MCF 10A (cell line): ENCODE measurements at regions of chr7 and their contacts with region 1.

Region 1: DNA sequence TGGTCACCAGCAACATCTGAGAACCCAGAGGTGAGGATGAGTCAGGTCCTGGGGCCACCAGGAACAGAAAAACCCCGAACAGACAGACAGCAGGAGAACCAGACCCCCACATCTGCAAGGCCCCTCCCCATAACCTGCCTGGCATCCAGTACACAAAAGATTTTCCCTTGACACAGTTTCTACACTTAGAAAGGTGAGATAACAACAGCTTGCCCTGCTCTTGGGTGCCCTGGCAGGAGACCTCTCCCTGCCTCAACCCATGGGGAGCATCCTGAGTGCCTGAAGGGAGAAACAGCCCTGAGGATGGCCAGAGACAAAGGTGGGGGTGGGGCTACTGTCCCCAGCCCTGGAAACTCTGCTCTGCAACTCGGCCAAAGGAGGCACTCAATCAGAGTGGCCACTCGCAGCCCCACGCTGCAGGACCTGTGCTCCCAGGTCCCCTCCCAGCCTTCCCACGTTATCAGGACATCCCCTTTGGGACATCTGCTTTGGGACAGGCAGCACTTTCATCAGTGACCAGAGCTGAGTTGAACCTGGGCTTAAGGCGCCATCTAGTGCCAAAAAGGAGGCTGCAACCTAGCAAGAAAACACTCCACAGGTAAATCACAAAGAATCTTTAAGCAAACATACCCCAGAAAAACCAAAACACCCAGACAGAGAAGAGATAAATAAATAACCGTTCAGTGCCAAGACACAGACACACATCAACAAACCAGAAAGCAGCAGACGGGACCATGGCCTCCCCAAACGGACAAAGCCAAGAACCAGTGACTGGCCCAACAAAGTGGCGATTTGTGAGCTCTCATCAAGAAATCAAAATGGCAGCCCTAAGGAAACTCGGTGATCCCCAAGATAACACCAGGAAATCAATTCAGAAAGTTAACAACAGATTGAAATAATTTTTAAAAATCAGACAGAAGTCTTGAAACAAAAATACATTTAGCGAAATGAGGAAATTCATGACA is 233.7 kb downstream of the PTPRN2 start:
- DNase-seq: peak; percentile 56
- H3K4me3 Mint-ChIP-seq: no peak overlapping the region
- H3K27ac Mint-ChIP-seq: no peak overlapping the region
- H3K4me1 Mint-ChIP-seq: no peaks in the 10 kb centered on the region
- H3K27me3 Mint-ChIP-seq: peaks cover 16% of the 10 kb centered on the region
- CTCF ChIP-seq: peak; percentile 67

Region 2: GRCh38 chr7:158010961-158011679 is 342.8 kb before region 1 on chr7:
- CTCF ChIA-PET with region 1: no interaction called
- POLR2A ChIA-PET with region 1: no interaction called
- intact Hi-C with region 1: loop called (anchors 5 kb)
- DNase-seq: no peak
- H3K4me3 Mint-ChIP-seq: peak overlapping the region; percentile 13
- H3K27ac Mint-ChIP-seq: no peak overlapping the region
- H3K4me1 Mint-ChIP-seq: no peaks in the 10 kb centered on the region
- H3K27me3 Mint-ChIP-seq: no peaks in the 10 kb centered on the region
- CTCF ChIP-seq: no peak

Region 3: DNA sequence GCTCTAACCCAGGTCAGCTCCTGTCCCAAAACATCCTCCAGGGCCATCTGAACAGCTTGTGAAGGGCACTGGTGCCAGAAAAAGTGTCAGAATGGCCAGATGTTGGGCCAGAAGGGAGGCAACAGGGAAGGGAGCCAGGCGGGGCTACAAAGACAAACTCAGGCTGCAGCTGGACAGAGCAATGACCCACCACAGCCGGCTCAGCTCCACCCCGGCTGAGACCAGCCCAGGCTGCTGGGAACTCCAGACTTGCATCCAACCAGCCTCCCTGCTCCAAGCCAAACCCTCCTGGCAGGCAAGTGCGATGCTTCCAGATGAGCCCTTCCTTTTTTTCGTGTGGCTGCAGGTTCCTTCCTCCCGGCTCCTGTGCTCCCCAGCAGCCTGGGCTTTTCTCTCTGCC is 233.2 kb before region 1 on chr7:
- CTCF ChIA-PET with region 1: no interaction called
- POLR2A ChIA-PET with region 1: no interaction called
- intact Hi-C with region 1: no loop called
- DNase-seq: no peak
- H3K4me3 Mint-ChIP-seq: no peak overlapping the region
- H3K27ac Mint-ChIP-seq: no peak overlapping the region
- H3K4me1 Mint-ChIP-seq: no peaks in the 10 kb centered on the region
- H3K27me3 Mint-ChIP-seq: no peaks in the 10 kb centered on the region
- CTCF ChIP-seq: no peak

Region 4: GRCh38 chr7:158343526-158343925 is 10.4 kb before region 1 on chr7:
- CTCF ChIA-PET with region 1: interaction called, 18 read pairs
- POLR2A ChIA-PET with region 1: no interaction called
- intact Hi-C with region 1: no loop called
- DNase-seq: no peak
- H3K4me3 Mint-ChIP-seq: no peak overlapping the region
- H3K27ac Mint-ChIP-seq: no peak overlapping the region
- H3K4me1 Mint-ChIP-seq: no peaks in the 10 kb centered on the region
- H3K27me3 Mint-ChIP-seq: no peaks in the 10 kb centered on the region
- CTCF ChIP-seq: no peak

Region 5: GRCh38 chr7:158366346-158366745 is 12.5 kb after region 1 on chr7:
- CTCF ChIA-PET with region 1: interaction called, 18 read pairs
- POLR2A ChIA-PET with region 1: no interaction called
- intact Hi-C with region 1: no loop called
- DNase-seq: no peak
- H3K4me3 Mint-ChIP-seq: no peak overlapping the region
- H3K27ac Mint-ChIP-seq: no peak overlapping the region
- H3K4me1 Mint-ChIP-seq: no peaks in the 10 kb centered on the region
- H3K27me3 Mint-ChIP-seq: no peaks in the 10 kb centered on the region
- CTCF ChIP-seq: no peak